ENCODE measurements at regions of chr4 and their contacts with region 1.

Region 1: GRCh38 chr4:64799751-64800150 is 390.5 kb upstream of the TECRL start:
- DNase-seq: no peak
- ATAC-seq: no peak
- H3K4me3 ChIP-seq: no peak overlapping the region
- H3K27ac ChIP-seq: no peak overlapping the region
- H3K4me1 ChIP-seq: no peaks in the 10 kb centered on the region
- H3K27me3 ChIP-seq: no peaks in the 10 kb centered on the region
- CTCF ChIP-seq: no peak
- POLR2A ChIP-seq: no peak
- RAD21 ChIP-seq: no peak

Region 2: GRCh38 chr4:64305565-64306254 is 494.0 kb before region 1 on chr4:
- CTCF ChIA-PET with region 1: no interaction called
- POLR2A ChIA-PET with region 1: no interaction called
- dilution Hi-C with region 1: no loop called
- in situ Hi-C with region 1: no loop called
- intact Hi-C with region 1: loop called (anchors 5 kb)
- DNase-seq: no peak
- ATAC-seq: no peak
- H3K4me3 ChIP-seq: no peak overlapping the region
- H3K27ac ChIP-seq: no peak overlapping the region
- H3K4me1 ChIP-seq: no peaks in the 10 kb centered on the region
- H3K27me3 ChIP-seq: no peaks in the 10 kb centered on the region
- CTCF ChIP-seq: no peak
- POLR2A ChIP-seq: no peak
- RAD21 ChIP-seq: no peak